Activated CD4-positive, alpha-beta T cell treated with anti-CD3 and anti-CD28 coated beads, Interleukin-2, amount 10 ng/mL, durations not matched to agents 24 days and 14 days (primary cell): ENCODE measurements at regions of chr2 and their contacts with region 1.

Region 1: GRCh38 chr2:64767670-64768468 is 114.2 kb upstream of the SERTAD2 start:
- DNase-seq: peak; percentile 93
- H3K4me3 Mint-ChIP-seq: peak overlapping the region; percentile 92
- H3K27ac Mint-ChIP-seq: peak overlapping the region; percentile 97
- H3K4me1 Mint-ChIP-seq: peaks cover 40% of the 10 kb centered on the region
- H3K27me3 Mint-ChIP-seq: peaks cover 2% of the 10 kb centered on the region

Region 2: DNA sequence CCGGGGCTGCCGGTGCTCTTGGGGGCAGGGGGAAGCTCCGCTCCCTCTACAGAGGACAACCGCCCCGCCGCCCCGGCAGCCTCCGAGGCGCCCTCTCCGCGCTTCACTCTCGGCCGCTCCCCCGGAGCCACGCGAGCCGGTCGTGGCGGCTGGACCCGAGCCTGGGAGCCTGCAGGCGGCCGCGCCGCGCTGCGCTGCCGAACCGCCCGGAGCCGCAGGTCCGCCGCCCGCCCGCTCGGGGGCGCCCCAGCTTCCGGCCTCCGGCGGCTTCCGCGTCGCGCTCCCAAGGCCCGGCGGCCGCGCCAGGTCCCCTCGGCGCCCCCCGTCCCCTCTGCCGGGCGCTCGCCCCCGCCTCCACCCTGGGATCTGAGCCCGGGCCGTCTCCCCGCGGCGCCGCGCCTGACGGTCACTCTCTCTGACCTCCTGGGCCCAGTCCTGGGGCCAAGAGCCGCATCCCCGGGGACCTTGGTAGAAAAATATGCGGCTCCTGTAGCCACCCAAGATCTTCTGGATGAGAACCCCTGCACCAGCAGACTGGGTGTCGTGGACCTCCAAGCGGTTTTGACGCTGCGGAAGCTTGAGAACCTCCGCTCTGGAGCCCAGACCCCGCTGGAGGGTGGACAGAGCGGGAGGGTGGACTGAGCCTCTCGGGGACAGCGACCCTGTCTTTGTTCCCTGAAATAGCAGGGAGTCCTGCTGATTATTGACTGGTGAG is 158.5 kb before region 1 on chr2:
- intact Hi-C with region 1: loop called (anchors 1 kb)
- DNase-seq: peak; percentile 93
- H3K4me3 Mint-ChIP-seq: peak overlapping the region; percentile 76
- H3K27ac Mint-ChIP-seq: peak overlapping the region; percentile 74
- H3K4me1 Mint-ChIP-seq: peaks cover 24% of the 10 kb centered on the region
- H3K27me3 Mint-ChIP-seq: peaks cover 20% of the 10 kb centered on the region

Region 3: DNA sequence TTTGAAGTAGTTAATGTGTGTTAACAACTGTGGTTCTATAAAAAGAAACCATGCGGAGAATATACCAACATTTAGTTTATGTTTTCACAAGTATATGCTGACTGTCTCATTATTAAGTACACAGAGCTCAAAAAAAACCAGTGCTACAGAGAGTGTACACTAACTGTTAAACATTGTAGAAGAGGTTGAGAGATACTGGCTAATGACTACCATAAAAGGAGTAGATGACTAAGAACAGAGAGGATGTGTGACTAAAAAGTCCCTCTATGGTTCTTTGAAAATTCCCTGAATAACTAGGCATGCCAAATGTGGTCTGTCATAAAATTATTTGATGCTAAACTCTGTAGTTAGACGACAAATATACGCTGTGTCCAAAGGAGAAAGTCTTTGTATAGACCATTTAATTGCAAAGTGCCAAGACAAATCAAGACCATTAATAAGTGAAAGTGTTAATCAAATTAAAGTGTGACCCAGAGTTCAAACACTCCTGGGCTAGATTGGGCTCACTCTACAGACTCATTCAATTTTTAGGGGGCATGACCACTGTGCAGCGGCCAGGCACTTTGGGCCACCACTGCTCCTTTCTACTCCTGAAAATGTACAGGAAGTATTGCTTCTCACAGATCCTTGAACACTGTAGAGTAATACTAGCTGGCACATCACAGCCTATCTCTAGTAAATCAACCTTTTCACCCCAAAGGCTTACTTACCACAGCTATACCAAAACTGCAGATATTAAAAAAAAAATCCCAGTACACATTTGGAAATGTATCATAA is 69.0 kb before region 1 on chr2:
- intact Hi-C with region 1: loop called (anchors 1 kb)
- DNase-seq: peak; percentile 64
- H3K4me3 Mint-ChIP-seq: peak overlapping the region; percentile 66
- H3K27ac Mint-ChIP-seq: peak overlapping the region; percentile 90
- H3K4me1 Mint-ChIP-seq: peaks cover 54% of the 10 kb centered on the region
- H3K27me3 Mint-ChIP-seq: no peaks in the 10 kb centered on the region

Region 4: DNA sequence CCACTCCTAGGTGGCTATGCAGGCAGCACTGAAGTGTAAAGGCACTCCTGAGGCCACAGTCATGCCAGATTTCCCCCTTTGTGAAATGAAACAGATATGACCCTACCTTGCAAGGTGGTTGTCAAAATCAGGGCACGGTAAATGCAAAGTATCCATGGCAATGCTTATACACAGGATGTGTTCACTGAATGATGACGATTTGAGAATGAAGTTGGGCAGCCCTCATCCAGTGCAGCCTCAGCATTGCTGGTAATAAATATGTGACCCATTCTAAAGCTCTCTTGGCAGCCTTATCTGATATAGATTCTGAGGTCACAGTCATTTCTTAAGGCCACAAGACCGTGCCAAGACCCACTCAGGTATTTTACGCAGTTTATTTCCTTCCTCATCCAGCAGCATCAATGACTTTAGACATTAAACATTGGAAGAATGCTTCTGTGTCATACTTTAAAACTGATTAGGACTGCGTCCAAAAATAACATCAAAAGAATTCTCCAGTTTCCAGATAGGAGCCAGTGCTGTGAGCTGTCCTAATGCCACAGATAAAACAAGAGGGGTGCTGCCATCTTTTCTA is 11.3 kb after region 1 on chr2:
- intact Hi-C with region 1: no loop called
- DNase-seq: no peak
- H3K4me3 Mint-ChIP-seq: no peak overlapping the region
- H3K27ac Mint-ChIP-seq: no peak overlapping the region
- H3K4me1 Mint-ChIP-seq: peaks cover 5% of the 10 kb centered on the region
- H3K27me3 Mint-ChIP-seq: peaks cover 4% of the 10 kb centered on the region

Region 5: GRCh38 chr2:64807417-64807816 is 39.5 kb after region 1 on chr2:
- intact Hi-C with region 1: loop called (anchors 1 kb)
- DNase-seq: peak; percentile 71
- H3K4me3 Mint-ChIP-seq: peak overlapping the region; percentile 15
- H3K27ac Mint-ChIP-seq: peak overlapping the region; percentile 59
- H3K4me1 Mint-ChIP-seq: peaks cover 27% of the 10 kb centered on the region
- H3K27me3 Mint-ChIP-seq: no peaks in the 10 kb centered on the region

Region 6: GRCh38 chr2:64831134-64831976 is 63.5 kb after region 1 on chr2:
- intact Hi-C with region 1: loop called (anchors 1 kb)
- DNase-seq: peak; percentile 95
- H3K4me3 Mint-ChIP-seq: peak overlapping the region; percentile 57
- H3K27ac Mint-ChIP-seq: peak overlapping the region; percentile 85
- H3K4me1 Mint-ChIP-seq: peaks cover 28% of the 10 kb centered on the region
- H3K27me3 Mint-ChIP-seq: peaks cover 8% of the 10 kb centered on the region

Region 7: DNA sequence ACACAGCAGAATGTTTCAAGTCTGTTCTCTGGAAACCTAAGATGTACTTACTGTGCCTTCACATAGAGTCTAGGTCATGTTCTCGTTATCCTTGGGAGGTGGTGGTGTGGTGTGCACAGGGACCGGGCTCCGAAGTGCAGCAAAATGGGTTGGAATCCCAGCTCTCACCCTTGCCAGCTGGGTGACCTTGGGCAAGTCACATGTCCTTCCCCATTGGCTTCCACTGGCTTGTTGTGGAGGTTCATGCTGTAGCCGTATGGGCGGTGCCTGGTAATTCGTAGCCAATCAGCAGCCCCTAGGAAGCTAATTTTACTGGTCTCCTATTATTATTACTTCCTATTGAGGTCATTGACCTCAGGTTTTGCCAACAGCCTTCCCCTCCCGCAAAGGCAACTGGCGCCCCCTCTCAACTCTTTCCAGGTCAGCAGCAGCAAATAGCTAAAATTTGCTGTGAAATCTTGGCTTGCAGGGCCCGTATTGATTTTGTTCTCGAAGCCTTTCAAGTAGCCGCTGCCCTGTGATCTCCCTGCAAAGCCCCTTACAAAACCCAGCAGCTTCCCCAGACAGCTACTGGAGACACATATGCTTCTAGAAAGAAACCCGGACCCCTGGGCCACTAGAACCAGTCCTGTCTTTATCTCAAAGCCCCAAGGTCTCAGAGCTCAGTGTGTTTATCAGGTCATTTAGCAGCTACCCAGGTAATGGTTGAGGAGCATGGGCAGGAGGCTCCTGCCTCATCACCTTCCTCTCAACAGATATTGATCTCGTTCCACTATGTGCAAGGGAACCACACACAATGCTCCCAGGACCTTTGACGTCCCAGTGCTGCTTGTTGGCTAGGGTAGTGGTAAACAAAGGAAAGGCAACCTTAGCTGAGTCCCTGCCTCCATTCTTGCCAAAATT is 154.9 kb after region 1 on chr2:
- intact Hi-C with region 1: no loop called
- DNase-seq: no peak
- H3K4me3 Mint-ChIP-seq: no peak overlapping the region
- H3K27ac Mint-ChIP-seq: no peak overlapping the region
- H3K4me1 Mint-ChIP-seq: peaks cover 18% of the 10 kb centered on the region
- H3K27me3 Mint-ChIP-seq: peaks cover 1% of the 10 kb centered on the region